ENCODE measurements at regions of chr15 and their contacts with region 1.

Region 1: GRCh38 chr15:25739687-25740121 is 123.4 kb downstream of the ATP10A start:
- DNase-seq: no peak
- H3K4me3 ChIP-seq: no peak overlapping the region
- H3K27ac ChIP-seq: no peak overlapping the region
- H3K4me1 ChIP-seq: peaks cover 0 to 95% (median 72%) of the 10 kb centered on the region in 4 donors
- H3K27me3 ChIP-seq: no peaks in the 10 kb centered on the region
- CTCF ChIP-seq: peak; percentile 29 to 40

Region 2: DNA sequence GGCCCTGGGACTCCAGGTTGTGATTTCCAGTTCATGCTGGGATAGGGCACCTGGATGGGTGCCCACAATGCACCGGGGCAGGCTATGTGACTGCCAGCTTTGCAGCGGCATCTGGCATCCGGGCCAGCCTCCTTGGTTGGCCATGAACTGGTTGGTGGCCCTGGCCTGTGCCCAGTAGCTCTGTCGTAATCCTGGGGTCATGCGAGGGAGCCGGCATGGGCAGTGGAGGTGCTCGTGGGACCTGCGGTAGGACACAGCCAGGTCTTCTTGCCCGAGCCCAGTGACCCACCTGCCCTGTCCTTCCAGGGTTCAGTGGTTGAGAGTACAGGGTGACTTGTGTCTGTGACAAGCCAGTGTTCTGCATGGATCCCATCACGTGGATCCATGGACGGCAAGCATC is 547.1 kb before region 1 on chr15:
- intact Hi-C with region 1: no loop called
- DNase-seq: no peak
- H3K4me3 ChIP-seq: no peak overlapping the region
- H3K27ac ChIP-seq: no peak overlapping the region
- H3K4me1 ChIP-seq: no peaks in the 10 kb centered on the region
- H3K27me3 ChIP-seq: no peaks in the 10 kb centered on the region
- CTCF ChIP-seq: no peak

Region 3: DNA sequence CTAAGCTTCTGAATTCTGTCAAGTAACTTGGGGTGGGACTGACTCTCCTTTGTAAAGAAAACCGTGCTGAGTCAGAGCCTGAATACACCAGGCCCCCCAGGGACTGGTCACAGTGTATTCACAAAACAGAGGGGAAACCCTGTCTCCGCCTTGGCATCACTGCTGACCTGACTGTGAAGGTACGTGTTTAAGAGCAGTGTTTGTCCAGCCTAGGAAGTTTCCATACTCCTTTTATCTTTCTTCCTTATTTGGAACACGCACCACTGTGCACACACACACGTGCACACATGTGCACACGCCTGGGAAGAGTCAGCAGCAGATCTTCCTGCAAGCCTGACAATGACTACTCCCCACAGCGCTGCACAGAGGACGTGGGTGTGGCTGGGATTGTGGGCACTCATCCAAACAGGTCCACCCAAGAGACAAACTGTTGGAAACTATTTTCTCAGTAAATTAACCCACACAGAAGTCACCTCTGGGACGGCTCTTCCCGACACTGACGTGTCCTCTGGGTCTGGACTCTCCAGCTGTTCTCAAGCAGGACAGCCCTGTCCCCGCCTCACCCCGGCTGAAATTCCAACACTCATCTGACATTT is 35.7 kb after region 1 on chr15:
- intact Hi-C with region 1: no loop called
- DNase-seq: no peak
- H3K4me3 ChIP-seq: no peak overlapping the region
- H3K27ac ChIP-seq: peak overlapping the region; percentile 25 to 41
- H3K4me1 ChIP-seq: peaks cover 0 to 89% (median 40%) of the 10 kb centered on the region in 4 donors
- H3K27me3 ChIP-seq: no peaks in the 10 kb centered on the region
- CTCF ChIP-seq: no peak

Region 4: GRCh38 chr15:25790000-25790660 is 50.4 kb after region 1 on chr15:
- intact Hi-C with region 1: loop called (anchors 10 kb)
- DNase-seq: peak; percentile 76 to 80
- H3K4me3 ChIP-seq: no peak overlapping the region
- H3K27ac ChIP-seq: peak overlapping the region; percentile 62 to 75
- H3K4me1 ChIP-seq: peaks cover 0 to 95% (median 55%) of the 10 kb centered on the region in 4 donors
- H3K27me3 ChIP-seq: no peaks in the 10 kb centered on the region
- CTCF ChIP-seq: peak in 1 of 2 experiments; percentile 19

Region 5: DNA sequence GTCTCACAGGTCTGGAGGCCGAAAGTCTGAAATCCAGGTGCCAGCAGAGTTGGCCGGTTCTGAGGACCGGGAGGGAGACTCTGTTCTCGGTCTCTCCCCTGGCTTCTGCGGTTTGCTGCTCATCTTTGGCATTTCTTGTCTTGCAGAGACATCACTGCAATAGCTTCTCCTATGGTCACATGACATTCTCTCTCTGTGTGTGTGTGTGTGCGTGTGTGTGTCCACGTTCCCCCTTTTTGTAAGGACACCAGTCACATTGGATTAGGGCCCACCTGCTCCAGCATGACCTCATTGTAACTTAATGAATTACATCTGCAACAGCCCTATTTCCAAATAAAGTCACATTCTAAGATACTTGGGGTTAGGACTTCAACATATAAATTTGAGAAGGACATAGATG is 135.9 kb after region 1 on chr15:
- intact Hi-C with region 1: no loop called
- DNase-seq: no peak
- H3K4me3 ChIP-seq: no peak overlapping the region
- H3K27ac ChIP-seq: no peak overlapping the region
- H3K4me1 ChIP-seq: no peaks in the 10 kb centered on the region
- H3K27me3 ChIP-seq: no peaks in the 10 kb centered on the region
- CTCF ChIP-seq: no peak

Region 6: GRCh38 chr15:26355472-26356074 is 615.9 kb after region 1 on chr15:
- intact Hi-C with region 1: no loop called
- DNase-seq: no peak
- H3K4me3 ChIP-seq: no peak overlapping the region
- H3K27ac ChIP-seq: no peak overlapping the region
- H3K4me1 ChIP-seq: no peaks in the 10 kb centered on the region
- H3K27me3 ChIP-seq: no peaks in the 10 kb centered on the region
- CTCF ChIP-seq: no peak

Measured in tibial artery (tissue), 4 donors.